Activated CD4-positive, alpha-beta memory T cell treated with anti-CD3 and anti-CD28 coated beads, Interleukin-2, amount 10 ng/mL, durations not matched to agents 7 days and 5 days (primary cell): ENCODE measurements at regions of chr11 and their contacts with region 1.

Region 1: DNA sequence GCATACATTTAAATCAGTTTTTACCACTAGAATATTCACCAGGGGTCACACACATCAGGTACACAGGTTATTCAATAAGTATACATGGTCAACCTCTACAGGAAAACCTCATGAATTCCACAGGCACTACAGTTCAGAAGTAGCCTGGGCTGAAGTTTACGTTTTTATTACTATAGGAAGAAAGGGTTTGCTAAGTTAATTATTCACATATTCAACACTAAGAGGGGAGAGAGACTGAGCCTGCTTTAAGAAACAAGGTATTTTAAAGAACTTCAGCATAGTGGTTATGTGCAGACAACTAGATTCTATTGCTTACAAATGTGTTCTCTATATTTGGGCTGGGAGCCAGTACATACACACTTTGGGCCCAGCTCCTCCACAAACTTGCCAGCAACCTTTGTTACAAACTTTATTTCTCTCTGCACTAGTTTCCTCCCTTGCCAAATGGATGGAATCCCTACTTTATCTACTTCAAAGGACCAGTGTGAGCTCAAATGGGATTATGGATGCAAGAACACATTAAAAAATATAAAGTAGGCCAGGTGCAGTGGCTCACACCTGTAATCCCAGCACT is 31.9 kb downstream of the IL18BP start:
- DNase-seq: no peak
- H3K4me3 Mint-ChIP-seq: no peak overlapping the region
- H3K27ac Mint-ChIP-seq: no peak overlapping the region
- H3K4me1 Mint-ChIP-seq: peaks cover 13% of the 10 kb centered on the region
- H3K27me3 Mint-ChIP-seq: no peaks in the 10 kb centered on the region

Region 2: GRCh38 chr11:72040726-72041441 is 10.3 kb after region 1 on chr11:
- CTCF ChIA-PET with region 1: interaction called, 38 read pairs
- POLR2A ChIA-PET with region 1: interaction called, 17 read pairs
- DNase-seq: peak; percentile 70
- H3K4me3 Mint-ChIP-seq: no peak overlapping the region
- H3K27ac Mint-ChIP-seq: no peak overlapping the region
- H3K4me1 Mint-ChIP-seq: peaks cover 8% of the 10 kb centered on the region
- H3K27me3 Mint-ChIP-seq: no peaks in the 10 kb centered on the region

Region 3: GRCh38 chr11:72080256-72080974 is 49.9 kb after region 1 on chr11 and contains the starts of genes LRRC51 and NUMA1:
- CTCF ChIA-PET with region 1: interaction called, 29 read pairs
- POLR2A ChIA-PET with region 1: interaction called, 4 read pairs
- DNase-seq: peak; percentile 100
- H3K4me3 Mint-ChIP-seq: peak within 1 kb of the TSS; percentile 88
- H3K27ac Mint-ChIP-seq: peak within 1 kb of the TSS; percentile 90
- H3K4me1 Mint-ChIP-seq: peaks cover 58% of the 10 kb centered on the region
- H3K27me3 Mint-ChIP-seq: no peaks in the 10 kb centered on the region
- total RNA-seq, gene LRRC51: 5.9 to 7.1 TPM
- total RNA-seq, gene NUMA1: 200 to 201 TPM

Region 4: DNA sequence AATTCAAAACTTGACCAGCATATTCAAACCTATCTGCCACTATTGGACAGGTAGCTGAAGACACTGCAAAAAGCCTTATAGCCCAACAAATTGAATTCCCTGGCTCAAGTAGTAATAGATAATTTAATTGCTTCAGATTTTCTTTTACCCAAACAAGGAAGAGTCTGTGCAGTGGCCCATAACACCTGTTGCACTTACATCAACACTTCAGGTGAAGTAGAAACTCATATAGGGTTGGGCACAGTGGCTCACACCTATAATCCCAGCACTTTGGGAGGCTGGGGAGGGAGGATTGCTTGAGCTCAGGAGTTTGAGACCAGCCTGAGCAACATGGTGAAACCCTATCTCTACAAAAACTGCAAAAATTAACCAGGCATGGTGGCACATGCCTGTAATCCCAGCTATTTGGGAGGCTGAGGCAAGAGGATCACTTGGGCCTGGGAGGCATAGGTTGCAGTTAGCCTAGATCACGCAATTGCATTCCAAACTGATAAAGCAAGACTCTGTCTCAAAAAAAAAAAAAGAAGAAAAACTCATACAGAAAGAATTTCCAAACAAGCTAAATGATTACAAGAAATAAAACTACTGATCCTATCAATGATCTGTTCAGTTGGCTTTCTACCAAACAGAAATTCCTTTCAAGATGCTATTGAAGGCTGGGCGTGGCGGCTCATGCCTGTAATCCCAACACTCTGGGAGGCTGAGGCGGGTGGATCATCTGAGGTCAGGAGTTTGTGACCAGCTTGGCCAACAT is 114.4 kb after region 1 on chr11:
- CTCF ChIA-PET with region 1: interaction called, 74 read pairs
- POLR2A ChIA-PET with region 1: no interaction called
- DNase-seq: no peak
- H3K4me3 Mint-ChIP-seq: no peak overlapping the region
- H3K27ac Mint-ChIP-seq: no peak overlapping the region
- H3K4me1 Mint-ChIP-seq: peaks cover 25% of the 10 kb centered on the region
- H3K27me3 Mint-ChIP-seq: peaks cover 14% of the 10 kb centered on the region